Head of caudate nucleus (tissue), 42 donors: ENCODE measurements at regions of chr10 and their contacts with region 1.

Region 1: DNA sequence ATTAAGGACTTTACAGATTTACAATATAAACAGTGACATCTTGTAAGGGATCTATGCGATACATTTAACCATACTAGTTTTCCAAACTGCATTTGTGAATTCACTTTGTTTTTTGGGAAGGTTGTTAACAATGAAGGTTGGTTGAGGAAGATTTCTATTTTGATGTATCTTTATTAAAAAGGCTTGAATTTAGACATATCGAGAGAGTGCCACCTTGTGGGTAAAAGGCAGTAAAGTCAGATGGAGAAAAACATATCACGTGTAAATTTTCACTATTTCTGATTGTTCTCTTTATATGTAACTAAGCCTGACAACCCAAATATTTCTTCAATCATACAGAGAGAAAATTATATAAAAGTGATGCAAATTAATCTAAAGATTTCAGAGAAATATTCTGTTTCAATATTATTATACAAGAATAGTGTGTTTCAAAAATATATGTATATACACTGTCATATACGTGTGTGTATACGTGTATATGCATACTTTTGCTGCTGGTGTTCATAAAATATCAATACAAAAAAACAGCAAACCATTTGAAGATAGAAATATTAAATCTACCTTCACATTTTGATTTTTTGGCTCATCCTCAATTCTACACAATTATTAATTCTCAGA is 988.6 kb downstream of the SORCS1 start:
- DNase-seq: peak in 3 of 42 donors; percentile 3 to 20 (median 8)

Region 2: DNA sequence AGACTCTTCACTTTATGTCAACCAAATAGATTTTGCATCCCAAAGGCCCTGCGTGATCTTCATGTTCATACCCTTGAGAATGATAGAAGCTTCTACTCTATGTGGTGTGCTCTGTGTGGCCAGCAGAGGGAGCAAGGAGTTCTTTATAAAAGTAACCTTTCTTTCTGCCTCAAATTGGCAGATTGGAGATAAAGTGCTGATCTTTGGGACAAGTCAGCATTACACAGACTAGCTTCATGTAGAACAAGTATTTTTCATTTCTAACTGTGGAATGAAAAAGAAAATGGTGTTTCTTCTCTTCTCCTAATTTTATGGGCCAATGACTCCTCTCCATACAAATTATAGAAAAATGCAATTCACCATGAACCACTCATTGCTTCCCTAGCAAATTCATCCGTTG is 225.5 kb before region 1 on chr10:
- intact Hi-C with region 1: loop called (anchors 5 kb)
- DNase-seq: peak; percentile 20 to 89 (median 72)

Region 3: GRCh38 chr10:106023329-106023728 is 152.5 kb before region 1 on chr10:
- intact Hi-C with region 1: no loop called
- DNase-seq: no peak

Region 4: DNA sequence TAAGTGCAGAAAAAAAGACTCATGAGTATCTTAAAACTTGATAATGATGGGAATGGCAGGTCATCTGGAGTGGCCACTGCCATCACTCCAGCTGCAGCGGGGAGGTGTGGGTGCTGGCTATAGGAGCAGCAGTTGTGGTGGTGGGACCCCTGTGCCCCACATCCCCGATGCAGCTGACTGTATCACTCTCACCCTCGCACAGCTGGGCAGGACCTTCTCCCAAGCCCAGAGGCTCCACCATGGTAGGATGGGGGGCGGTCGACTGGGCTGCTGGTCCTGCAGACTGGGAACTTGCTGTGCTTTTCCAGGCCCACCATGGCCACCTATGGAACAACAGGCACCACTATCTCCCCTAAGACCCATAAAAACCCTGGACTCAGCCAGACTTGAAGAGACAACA is 144.2 kb after region 1 on chr10:
- intact Hi-C with region 1: no loop called
- DNase-seq: no peak

Region 5: GRCh38 chr10:106467506-106467905 is 291.6 kb after region 1 on chr10:
- intact Hi-C with region 1: no loop called
- DNase-seq: no peak